IMR-90 (cell line): ENCODE measurements at regions of chr1 and their contacts with region 1.

Region 1: DNA sequence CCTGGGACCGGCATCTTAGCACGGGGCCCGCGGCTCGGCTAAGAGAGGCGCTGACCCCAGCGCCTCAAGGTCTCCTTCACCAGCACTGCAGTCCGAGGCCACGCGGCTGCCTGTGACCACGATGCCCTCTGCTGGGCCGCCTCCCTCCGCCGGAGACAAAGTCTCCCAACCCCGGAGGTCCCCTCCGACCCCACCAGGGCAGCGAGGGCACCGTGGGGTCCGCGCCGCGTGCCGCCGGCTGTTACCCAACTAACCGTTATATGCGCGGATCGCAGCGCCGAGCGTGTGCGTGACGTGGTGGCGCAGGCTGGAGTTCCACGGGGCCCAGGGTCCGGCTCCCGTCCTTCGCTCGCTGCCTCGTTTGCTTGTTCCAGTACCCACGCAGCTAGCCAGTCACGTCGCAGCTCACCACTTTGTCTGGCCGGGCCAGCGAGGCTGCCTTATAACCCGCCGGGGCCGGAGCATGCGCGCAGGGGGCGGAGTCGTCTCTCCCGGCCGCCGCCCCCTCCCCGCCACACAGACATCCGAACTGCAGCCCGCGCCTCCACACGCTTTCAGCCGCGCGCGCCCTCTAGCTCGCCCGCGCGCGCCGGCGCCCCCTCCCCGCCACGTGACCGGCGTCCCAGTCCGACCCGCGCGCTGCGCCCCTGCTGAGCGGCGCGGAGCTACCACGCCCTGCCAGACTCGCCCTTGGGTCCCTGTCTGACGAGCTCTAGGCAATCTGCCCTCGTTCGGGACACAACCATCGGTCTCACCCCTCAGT is at the start of gene SLC16A1:
- DNase-seq: peak; percentile 91
- ATAC-seq: peak; percentile 88
- H3K4me3 ChIP-seq: peak within 1 kb of the TSS; percentile 80
- H3K27ac ChIP-seq: peak within 1 kb of the TSS; percentile 90
- H3K4me1 ChIP-seq: no peaks in the 10 kb centered on the region
- H3K27me3 ChIP-seq: no peaks in the 10 kb centered on the region
- CTCF ChIP-seq: peak; percentile 38
- POLR2A ChIP-seq: peak; percentile 98
- RAD21 ChIP-seq: peak; percentile 32
- total RNA-seq, gene SLC16A1: 156 and 187 TPM in 2 replicates

Region 2: GRCh38 chr1:112809253-112809684 is 146.7 kb before region 1 on chr1:
- CTCF ChIA-PET with region 1: no interaction called
- POLR2A ChIA-PET with region 1: no interaction called
- dilution Hi-C with region 1: no loop called
- in situ Hi-C with region 1: no loop called
- intact Hi-C with region 1: loop called (anchors 1 kb)
- DNase-seq: peak; percentile 57
- ATAC-seq: peak; percentile 98
- H3K4me3 ChIP-seq: no peak overlapping the region
- H3K27ac ChIP-seq: no peak overlapping the region
- H3K4me1 ChIP-seq: no peaks in the 10 kb centered on the region
- H3K27me3 ChIP-seq: peaks cover 9% of the 10 kb centered on the region
- CTCF ChIP-seq: peak; percentile 87
- POLR2A ChIP-seq: no peak
- RAD21 ChIP-seq: peak; percentile 89

Region 3: GRCh38 chr1:112882271-112882744 is 73.7 kb before region 1 on chr1:
- CTCF ChIA-PET with region 1: interaction called, 3 read pairs
- POLR2A ChIA-PET with region 1: no interaction called
- dilution Hi-C with region 1: no loop called
- in situ Hi-C with region 1: no loop called
- intact Hi-C with region 1: loop called (anchors 1 kb)
- DNase-seq: no peak
- ATAC-seq: no peak
- H3K4me3 ChIP-seq: no peak overlapping the region
- H3K27ac ChIP-seq: no peak overlapping the region
- H3K4me1 ChIP-seq: peaks cover 5% of the 10 kb centered on the region
- H3K27me3 ChIP-seq: peaks cover 5% of the 10 kb centered on the region
- CTCF ChIP-seq: no peak
- POLR2A ChIP-seq: no peak
- RAD21 ChIP-seq: no peak

Region 4: GRCh38 chr1:112911506-112911905 is 44.5 kb before region 1 on chr1:
- CTCF ChIA-PET with region 1: no interaction called
- POLR2A ChIA-PET with region 1: interaction called, 14 read pairs
- dilution Hi-C with region 1: no loop called
- in situ Hi-C with region 1: no loop called
- intact Hi-C with region 1: no loop called
- DNase-seq: no peak
- ATAC-seq: no peak
- H3K4me3 ChIP-seq: no peak overlapping the region
- H3K27ac ChIP-seq: no peak overlapping the region
- H3K4me1 ChIP-seq: peaks cover 4% of the 10 kb centered on the region; the same call in 1 of the 2 replicates
- H3K27me3 ChIP-seq: no peaks in the 10 kb centered on the region
- CTCF ChIP-seq: no peak
- POLR2A ChIP-seq: no peak
- RAD21 ChIP-seq: no peak